A673 (cell line): ENCODE measurements at regions of chr1 and their contacts with region 1.

Region 1: DNA sequence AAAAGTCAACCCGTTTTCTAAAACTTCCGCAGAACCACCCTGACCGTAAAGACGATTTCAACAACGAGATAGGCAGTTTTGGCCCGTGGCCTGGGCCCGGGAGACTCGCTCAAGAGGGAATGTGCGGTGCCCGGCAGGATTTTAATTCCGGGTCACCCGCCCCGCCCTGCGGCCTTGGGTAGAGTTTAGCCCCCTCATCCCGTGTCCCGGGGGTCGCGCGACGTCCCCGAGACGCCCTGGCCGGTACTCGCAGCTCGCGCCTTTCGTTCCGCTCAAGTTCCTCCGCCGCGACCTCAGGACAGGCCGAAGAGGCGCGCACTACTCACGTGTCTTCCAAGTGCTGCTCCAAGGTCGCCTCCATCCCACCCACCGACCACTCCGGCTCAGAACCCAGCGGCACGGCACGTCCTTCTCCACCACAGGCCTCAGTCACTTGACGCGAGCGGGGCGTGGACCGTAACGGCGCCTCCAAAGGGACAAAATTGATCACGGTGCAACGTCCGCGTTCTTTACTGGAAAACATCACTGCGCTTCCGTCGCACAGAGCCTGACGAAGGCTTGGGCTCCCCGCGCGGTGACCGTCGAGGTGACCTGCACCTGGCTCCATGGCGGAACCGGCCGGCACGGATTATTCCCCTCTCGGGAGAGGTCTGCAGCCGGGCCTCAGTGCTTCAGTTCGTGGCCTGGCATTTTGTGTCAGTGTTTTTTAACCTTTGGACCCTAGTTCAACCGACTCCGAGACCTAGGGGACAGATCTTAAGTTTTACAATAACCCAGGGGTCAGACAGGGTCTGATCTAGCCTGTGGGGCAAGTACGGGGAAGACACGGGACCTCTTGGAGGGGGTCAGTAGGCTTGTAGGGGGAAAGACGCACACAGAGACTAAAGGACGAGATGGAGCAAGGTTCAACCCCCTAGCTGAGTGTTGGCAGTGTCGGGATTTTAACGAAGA is at the start of gene LAMTOR5:
- DNase-seq: peak; percentile 94
- H3K4me3 ChIP-seq: peak within 1 kb of the TSS; percentile 87
- H3K27ac ChIP-seq: peak within 1 kb of the TSS; percentile 83
- H3K4me1 ChIP-seq: peaks cover 7% of the 10 kb centered on the region
- H3K27me3 ChIP-seq: no peaks in the 10 kb centered on the region
- CTCF ChIP-seq: no peak
- total RNA-seq, gene LAMTOR5: 138 and 144 TPM in 2 replicates

Region 2: GRCh38 chr1:110338886-110339406 is 68.6 kb before region 1 on chr1 and contains the start of gene RBM15:
- CTCF ChIA-PET with region 1: no interaction called
- POLR2A ChIA-PET with region 1: no interaction called
- intact Hi-C with region 1: loop called (anchors 2 kb)
- DNase-seq: peak; percentile 100
- H3K4me3 ChIP-seq: peak within 1 kb of the TSS; percentile 75
- H3K27ac ChIP-seq: peak within 1 kb of the TSS; percentile 98
- H3K4me1 ChIP-seq: peaks cover 35% of the 10 kb centered on the region
- H3K27me3 ChIP-seq: no peaks in the 10 kb centered on the region
- CTCF ChIP-seq: no peak
- total RNA-seq, gene RBM15: 59.9 and 60.3 TPM in 2 replicates

Region 3: GRCh38 chr1:110350360-110350759 is 57.2 kb before region 1 on chr1:
- CTCF ChIA-PET with region 1: no interaction called
- POLR2A ChIA-PET with region 1: no interaction called
- intact Hi-C with region 1: no loop called
- DNase-seq: no peak
- H3K4me3 ChIP-seq: no peak overlapping the region
- H3K27ac ChIP-seq: peak overlapping the region; percentile 8
- H3K4me1 ChIP-seq: peaks cover 15% of the 10 kb centered on the region
- H3K27me3 ChIP-seq: no peaks in the 10 kb centered on the region
- CTCF ChIP-seq: no peak

Region 4: GRCh38 chr1:110383251-110383990 is 24.1 kb before region 1 on chr1:
- CTCF ChIA-PET with region 1: interaction called, 14 read pairs
- POLR2A ChIA-PET with region 1: no interaction called
- intact Hi-C with region 1: no loop called
- DNase-seq: peak; percentile 39
- H3K4me3 ChIP-seq: no peak overlapping the region
- H3K27ac ChIP-seq: no peak overlapping the region
- H3K4me1 ChIP-seq: peaks cover 9% of the 10 kb centered on the region
- H3K27me3 ChIP-seq: no peaks in the 10 kb centered on the region
- CTCF ChIP-seq: no peak